Right cardiac atrium (tissue), 5 donors: ENCODE measurements at regions of chr7 and their contacts with region 1.

Region 1: DNA sequence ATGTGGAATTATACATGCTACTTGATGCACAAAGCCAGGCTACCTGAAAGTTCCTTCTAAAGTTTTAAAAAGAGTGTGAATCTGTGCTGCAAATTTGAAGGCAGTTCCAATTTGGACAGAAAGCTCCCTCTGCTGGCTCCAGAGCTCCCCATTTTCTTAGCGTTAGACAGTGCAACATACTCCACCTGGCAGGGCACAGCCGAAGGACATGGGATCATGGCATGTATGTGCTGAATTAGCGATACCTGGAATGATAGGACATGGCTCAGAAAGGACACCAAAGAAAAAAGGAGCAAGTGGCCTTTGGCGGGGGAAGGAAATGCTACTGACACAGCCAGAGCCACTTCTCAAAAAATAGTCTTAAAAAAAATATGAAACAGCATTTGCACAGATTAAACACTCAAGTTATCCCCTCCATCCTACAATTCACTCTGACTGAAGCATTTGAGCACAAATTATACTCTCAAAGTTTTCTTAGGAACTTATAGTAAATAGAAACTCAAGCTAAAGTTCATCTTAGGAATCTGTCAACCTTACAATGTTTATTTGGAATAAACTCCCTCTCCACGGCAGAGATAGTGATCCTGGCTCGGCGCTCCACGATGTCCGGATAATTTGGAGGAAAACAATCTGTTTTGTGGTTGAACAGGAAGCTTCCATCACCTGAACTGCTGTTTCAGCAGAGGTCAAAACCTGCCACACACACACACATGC is 80.0 kb downstream of the C7orf25 start:
- DNase-seq: peak in 2 of 3 donors; percentile 31 to 61
- ATAC-seq: peak; percentile 61 to 78
- H3K4me3 ChIP-seq: no peak overlapping the region
- H3K27ac ChIP-seq: no peak overlapping the region
- H3K4me1 ChIP-seq: no peaks in the 10 kb centered on the region
- H3K27me3 ChIP-seq: no peaks in the 10 kb centered on the region

Region 2: GRCh38 chr7:40833888-40834234 is 1998.0 kb before region 1 on chr7:
- intact Hi-C with region 1: no loop called
- DNase-seq: no peak
- ATAC-seq: no peak
- H3K4me3 ChIP-seq: no peak overlapping the region
- H3K27ac ChIP-seq: no peak overlapping the region
- H3K4me1 ChIP-seq: no peaks in the 10 kb centered on the region
- H3K27me3 ChIP-seq: no peaks in the 10 kb centered on the region

Region 3: GRCh38 chr7:41416208-41416595 is 1415.7 kb before region 1 on chr7:
- intact Hi-C with region 1: no loop called
- DNase-seq: no peak
- ATAC-seq: no peak
- H3K4me3 ChIP-seq: no peak overlapping the region
- H3K27ac ChIP-seq: no peak overlapping the region
- H3K4me1 ChIP-seq: no peaks in the 10 kb centered on the region
- H3K27me3 ChIP-seq: no peaks in the 10 kb centered on the region

Region 4: DNA sequence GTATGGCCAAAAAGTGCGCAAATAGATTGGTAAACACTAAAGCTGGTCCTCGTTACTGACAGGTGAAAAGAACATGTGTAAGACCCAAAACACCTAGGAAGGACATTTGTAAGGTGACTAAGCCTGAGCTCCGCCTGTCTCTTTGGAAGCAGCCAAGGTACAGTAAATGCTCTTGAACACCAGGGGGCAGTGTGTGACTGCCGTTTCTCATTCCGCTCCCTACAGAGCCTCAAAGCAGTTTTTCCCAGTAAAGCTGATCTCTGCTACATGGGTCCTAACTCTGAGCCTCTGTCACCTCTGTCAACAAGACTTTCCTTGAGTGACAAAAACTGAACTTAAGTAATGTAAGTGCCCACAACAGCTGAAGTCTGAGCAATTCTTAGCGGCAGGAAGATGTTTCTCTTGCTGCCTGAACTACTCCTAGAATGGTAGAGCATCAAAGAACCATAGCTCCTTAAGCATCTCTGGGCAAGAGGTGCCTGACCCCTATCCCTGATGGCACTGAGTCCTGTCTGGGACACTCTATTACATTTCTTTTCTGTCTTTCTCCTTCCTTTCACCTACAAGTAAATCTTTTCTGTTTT is 891.0 kb before region 1 on chr7:
- intact Hi-C with region 1: loop called in 3 of 4 experiments (anchors 5 kb)
- DNase-seq: peak; percentile 60 to 75 (median 75)
- ATAC-seq: peak; percentile 76 to 87
- H3K4me3 ChIP-seq: no peak overlapping the region
- H3K27ac ChIP-seq: no peak overlapping the region
- H3K4me1 ChIP-seq: no peaks in the 10 kb centered on the region
- H3K27me3 ChIP-seq: no peaks in the 10 kb centered on the region

Region 5: DNA sequence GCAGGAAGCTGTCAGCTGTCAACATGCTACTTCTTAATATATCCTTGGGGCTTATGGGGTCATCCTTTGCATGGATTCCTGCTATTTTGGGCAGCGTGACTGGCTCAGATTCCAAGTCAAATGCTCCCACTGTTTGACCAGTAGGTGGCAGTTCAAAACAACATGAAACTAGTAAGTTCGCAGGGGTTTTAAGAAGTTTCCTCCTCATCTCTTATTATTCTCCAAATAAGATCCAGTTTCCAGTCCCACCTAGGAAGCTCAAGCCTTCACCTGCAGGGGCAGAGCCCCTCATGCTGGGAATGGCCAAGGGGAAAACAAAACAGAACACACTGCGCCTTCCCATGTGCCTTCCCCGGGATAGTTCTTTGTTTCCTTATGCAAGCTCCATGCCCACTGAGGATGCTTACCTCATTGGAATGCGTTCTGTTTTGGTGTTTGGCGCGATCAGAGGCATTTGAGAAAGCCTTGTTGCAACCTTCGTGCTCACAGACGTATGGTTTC is 854.7 kb before region 1 on chr7:
- intact Hi-C with region 1: loop called in 2 of 4 experiments (anchors 5 to 10 kb)
- DNase-seq: no peak
- ATAC-seq: peak; percentile 59 to 65
- H3K4me3 ChIP-seq: no peak overlapping the region
- H3K27ac ChIP-seq: no peak overlapping the region
- H3K4me1 ChIP-seq: no peaks in the 10 kb centered on the region
- H3K27me3 ChIP-seq: no peaks in the 10 kb centered on the region

Region 6: DNA sequence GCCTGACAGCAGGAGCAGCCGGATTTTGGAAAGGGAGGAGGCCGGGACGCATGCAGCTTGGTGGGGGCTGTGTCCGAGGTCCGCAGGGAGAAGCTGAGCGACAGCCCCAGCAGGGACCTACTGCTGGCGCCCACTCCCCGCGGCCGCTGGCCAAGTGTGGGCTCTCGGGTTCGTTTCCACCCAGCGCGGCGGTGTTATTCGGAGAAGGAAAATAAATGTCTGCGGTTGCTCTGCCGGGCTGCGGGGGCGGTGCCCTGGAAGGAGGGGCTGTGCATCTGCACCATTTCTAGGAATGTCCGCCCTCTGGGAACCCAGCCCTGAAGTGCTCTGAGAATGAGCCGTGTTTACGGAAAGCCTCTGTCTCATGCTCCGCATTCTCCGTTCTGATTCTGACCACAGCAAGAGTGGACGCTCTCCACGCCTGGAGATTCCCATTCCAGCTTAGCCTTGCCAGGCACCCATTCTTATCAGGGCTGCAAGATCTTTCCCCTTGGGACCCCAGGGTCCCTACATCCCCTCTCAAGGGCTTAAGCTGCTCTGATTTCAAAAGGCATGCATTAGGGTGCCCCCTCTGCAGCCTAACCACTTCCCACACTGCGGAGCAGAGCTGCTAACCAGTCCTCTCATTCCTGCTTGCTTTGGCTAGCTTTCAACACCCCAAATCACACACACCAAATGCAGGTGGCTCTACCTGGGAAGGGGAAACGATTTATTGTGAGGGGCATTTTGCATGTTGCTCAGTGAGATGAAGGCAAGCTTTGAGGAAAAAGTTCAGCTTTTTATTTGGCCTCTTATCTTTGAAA is 338.2 kb before region 1 on chr7:
- intact Hi-C with region 1: no loop called
- DNase-seq: peak; percentile 78 to 89 (median 80)
- ATAC-seq: peak; percentile 96 to 99
- H3K4me3 ChIP-seq: peak overlapping the region; percentile 34
- H3K27ac ChIP-seq: no peak overlapping the region
- H3K4me1 ChIP-seq: peaks cover 1% of the 10 kb centered on the region
- H3K27me3 ChIP-seq: no peaks in the 10 kb centered on the region